A673 (cell line): ENCODE measurements at regions of chr9 and their contacts with region 1.

Region 1: DNA sequence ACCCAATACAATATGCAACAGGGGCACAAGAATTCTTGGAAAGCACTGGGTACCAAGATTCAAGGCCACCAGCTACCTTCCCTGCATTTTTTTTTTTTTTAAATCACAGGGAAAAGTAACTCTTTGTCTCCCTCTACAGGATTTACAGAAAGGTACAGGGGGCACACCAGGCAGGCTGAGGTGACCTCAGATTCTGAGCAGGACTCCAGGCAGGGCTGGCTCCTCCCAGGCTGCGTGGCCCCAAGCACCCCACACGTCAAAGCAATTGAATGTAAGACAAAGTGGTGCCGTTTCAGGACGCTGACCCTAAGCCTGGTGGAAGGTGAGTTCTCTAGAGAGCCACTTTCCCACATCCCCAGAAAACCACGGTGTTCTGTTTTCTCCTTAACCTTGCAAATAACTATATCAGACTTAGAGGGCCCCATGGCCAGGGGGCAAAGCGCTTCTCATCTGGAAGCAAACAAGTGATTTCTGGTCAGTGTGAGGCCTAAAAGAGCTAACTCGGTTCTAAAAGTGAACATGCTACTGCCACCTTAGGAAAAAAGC is 222.6 kb downstream of the ROR2 start:
- DNase-seq: peak; percentile 64
- H3K4me3 ChIP-seq: no peak overlapping the region
- H3K27ac ChIP-seq: no peak overlapping the region
- H3K4me1 ChIP-seq: no peaks in the 10 kb centered on the region
- H3K27me3 ChIP-seq: no peaks in the 10 kb centered on the region
- CTCF ChIP-seq: peak; percentile 80

Region 2: DNA sequence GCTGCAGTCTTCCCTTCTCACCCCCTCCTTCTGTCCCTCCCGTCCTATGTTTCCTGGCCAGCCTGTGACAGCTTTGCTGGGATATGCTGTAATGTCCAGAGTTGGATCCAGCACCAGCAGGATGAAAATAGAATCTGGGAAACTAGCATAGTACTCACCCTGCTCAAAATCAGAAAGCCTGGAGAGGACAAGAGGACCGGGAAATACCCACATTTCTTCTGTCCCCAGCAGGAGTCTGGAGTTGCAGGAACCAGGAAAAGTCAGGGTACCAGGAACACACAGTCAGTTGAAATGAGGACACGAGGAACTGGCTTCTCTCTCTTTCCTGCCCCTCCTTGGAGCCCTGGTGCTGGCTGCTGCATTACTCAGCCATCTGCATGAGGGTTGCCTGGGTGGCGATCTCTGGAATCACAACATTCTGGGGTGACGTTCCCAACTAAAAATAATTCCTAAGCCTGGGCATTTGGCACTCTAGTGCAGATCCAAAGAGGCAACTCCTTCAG is 244.1 kb before region 1 on chr9:
- CTCF ChIA-PET with region 1: no interaction called
- POLR2A ChIA-PET with region 1: no interaction called
- intact Hi-C with region 1: no loop called
- DNase-seq: no peak
- H3K4me3 ChIP-seq: no peak overlapping the region
- H3K27ac ChIP-seq: no peak overlapping the region
- H3K4me1 ChIP-seq: no peaks in the 10 kb centered on the region
- H3K27me3 ChIP-seq: no peaks in the 10 kb centered on the region
- CTCF ChIP-seq: no peak

Region 3: GRCh38 chr9:91654527-91654926 is 72.9 kb before region 1 on chr9:
- CTCF ChIA-PET with region 1: no interaction called
- POLR2A ChIA-PET with region 1: no interaction called
- intact Hi-C with region 1: loop called (anchors 5 kb)
- DNase-seq: no peak
- H3K4me3 ChIP-seq: no peak overlapping the region
- H3K27ac ChIP-seq: no peak overlapping the region
- H3K4me1 ChIP-seq: no peaks in the 10 kb centered on the region
- H3K27me3 ChIP-seq: no peaks in the 10 kb centered on the region
- CTCF ChIP-seq: no peak

Region 4: DNA sequence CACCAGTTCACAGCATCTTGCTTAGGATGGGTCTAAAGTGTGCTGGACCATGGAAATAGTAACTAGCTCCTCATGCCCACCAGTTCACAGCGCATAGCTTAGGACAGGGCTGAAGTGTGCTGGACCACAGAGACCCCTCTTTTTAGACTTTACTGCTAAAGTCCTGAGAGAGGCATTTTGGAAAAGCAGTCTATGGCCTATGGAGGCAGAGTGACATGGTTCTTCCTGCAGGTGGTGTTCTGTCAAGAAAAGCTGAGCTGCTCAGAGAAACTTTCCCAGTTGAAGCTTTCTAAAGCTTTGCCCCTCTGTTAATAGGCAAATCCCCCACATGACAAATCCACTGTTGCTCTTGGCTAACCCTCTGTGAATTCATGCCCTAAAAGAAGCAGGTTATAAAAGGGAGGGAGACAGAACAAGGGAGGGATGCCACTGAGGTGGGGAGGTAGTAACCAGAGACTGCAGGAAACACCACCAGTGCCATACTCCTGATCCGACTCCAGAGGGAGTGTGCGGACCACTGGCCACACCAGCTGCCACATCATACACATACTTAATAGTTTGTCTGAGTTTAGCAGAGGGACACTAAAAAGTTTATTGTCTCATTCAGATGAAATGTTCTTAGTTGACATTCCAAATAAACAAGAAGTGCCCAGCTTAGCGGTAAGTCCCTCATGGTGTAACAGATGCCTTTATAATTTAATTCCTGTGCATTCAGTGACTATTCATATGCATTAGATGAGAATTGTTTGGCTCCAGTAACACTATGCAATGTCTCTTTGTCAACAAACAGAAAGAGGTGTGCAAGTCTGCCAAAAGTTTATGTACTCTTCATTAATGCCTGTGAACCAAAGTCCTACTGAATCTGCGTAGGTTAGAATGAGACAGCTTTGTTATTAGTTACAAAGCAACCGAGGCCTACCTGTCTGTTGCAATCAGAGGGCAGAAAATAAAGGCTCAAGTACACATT is 67.6 kb before region 1 on chr9:
- CTCF ChIA-PET with region 1: no interaction called
- POLR2A ChIA-PET with region 1: no interaction called
- intact Hi-C with region 1: loop called (anchors 2 kb)
- DNase-seq: peak; percentile 31
- H3K4me3 ChIP-seq: no peak overlapping the region
- H3K27ac ChIP-seq: no peak overlapping the region
- H3K4me1 ChIP-seq: no peaks in the 10 kb centered on the region
- H3K27me3 ChIP-seq: no peaks in the 10 kb centered on the region
- CTCF ChIP-seq: peak; percentile 63